Activated CD4-positive, alpha-beta T cell treated with anti-CD3 and anti-CD28 coated beads for 36 hours (primary cell): ENCODE measurements at regions of chrX and their contacts with region 1.

Region 1: DNA sequence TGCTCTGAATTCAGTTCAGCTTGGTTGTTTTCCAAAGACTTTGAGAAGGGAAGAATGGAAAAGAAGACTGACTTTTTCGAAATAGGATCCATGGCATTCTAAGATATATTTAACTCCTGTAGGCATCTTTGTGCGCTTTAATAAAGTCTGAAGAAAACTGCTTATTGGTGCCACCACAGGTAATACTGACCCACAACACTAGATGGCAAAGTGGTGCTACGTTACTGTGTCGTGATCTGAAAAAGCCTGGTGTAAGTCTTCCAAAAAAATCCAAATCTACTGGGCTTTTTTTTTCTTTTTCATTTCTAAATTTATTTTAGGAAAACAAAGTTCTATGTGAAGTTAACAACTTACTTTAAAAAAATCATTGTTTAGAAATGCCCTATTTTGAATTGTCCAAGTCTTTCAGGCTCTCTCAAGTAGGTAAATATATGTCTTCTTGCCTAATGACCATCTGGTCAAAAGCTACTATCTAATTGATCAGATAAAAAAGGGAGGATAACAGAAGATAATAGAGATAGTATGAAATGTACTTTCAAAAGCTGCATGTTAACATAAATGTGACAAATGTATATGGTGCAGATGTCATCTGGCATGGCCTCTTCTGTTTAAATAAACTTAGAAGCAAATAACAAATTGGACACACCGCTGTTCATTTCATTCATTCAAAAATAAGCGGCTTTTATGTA is 47.0 kb upstream of the MID1IP1 start:
- DNase-seq: peak; percentile 41
- ATAC-seq: no peak
- H3K4me3 Mint-ChIP-seq: no peak overlapping the region
- H3K27ac Mint-ChIP-seq: no peak overlapping the region
- H3K4me1 Mint-ChIP-seq: no peaks in the 10 kb centered on the region
- H3K27me3 Mint-ChIP-seq: no peaks in the 10 kb centered on the region

Region 2: DNA sequence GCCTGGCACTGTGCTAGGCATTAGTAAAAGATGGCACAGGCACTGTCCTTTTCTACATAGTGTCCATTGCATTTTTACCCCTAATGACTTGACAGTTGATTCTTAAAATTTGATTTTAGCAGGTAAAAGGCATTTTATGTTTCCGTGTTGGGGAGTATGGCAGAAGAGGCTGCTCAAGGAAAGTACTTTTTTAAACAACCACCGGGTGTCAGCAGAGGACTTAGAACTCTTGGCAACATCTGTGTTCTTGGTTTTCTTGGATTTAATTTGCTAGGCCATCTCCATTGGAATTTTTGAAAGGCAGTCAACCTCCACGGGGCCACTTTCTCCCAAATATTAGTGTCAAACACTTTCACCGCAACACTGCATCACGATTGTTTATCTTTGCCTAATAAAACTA is 90.0 kb before region 1 on chrX:
- CTCF ChIA-PET with region 1: no interaction called
- POLR2A ChIA-PET with region 1: no interaction called
- intact Hi-C with region 1: loop called in 1 of 2 experiments (anchors 5 kb)
- DNase-seq: peak; percentile 22
- ATAC-seq: no peak
- H3K4me3 Mint-ChIP-seq: no peak overlapping the region
- H3K27ac Mint-ChIP-seq: no peak overlapping the region
- H3K4me1 Mint-ChIP-seq: no peaks in the 10 kb centered on the region
- H3K27me3 Mint-ChIP-seq: peaks cover 2% of the 10 kb centered on the region

Region 3: GRCh38 chrX:38985375-38985774 is 231.1 kb after region 1 on chrX:
- CTCF ChIA-PET with region 1: interaction called, 5 read pairs
- POLR2A ChIA-PET with region 1: no interaction called
- intact Hi-C with region 1: loop called (anchors 1 to 5 kb)
- DNase-seq: peak; percentile 7
- ATAC-seq: peak; percentile 65
- H3K4me3 Mint-ChIP-seq: no peak overlapping the region
- H3K27ac Mint-ChIP-seq: no peak overlapping the region
- H3K4me1 Mint-ChIP-seq: no peaks in the 10 kb centered on the region
- H3K27me3 Mint-ChIP-seq: no peaks in the 10 kb centered on the region

Region 4: GRCh38 chrX:39149761-39150160 is 395.5 kb after region 1 on chrX:
- CTCF ChIA-PET with region 1: interaction called, 3 read pairs
- POLR2A ChIA-PET with region 1: no interaction called
- intact Hi-C with region 1: loop called (anchors 1 to 2 kb)
- DNase-seq: peak; percentile 81
- ATAC-seq: no peak
- H3K4me3 Mint-ChIP-seq: no peak overlapping the region
- H3K27ac Mint-ChIP-seq: no peak overlapping the region
- H3K4me1 Mint-ChIP-seq: no peaks in the 10 kb centered on the region
- H3K27me3 Mint-ChIP-seq: no peaks in the 10 kb centered on the region